ENCODE measurements at regions of chr1 and their contacts with region 1.

Region 1: DNA sequence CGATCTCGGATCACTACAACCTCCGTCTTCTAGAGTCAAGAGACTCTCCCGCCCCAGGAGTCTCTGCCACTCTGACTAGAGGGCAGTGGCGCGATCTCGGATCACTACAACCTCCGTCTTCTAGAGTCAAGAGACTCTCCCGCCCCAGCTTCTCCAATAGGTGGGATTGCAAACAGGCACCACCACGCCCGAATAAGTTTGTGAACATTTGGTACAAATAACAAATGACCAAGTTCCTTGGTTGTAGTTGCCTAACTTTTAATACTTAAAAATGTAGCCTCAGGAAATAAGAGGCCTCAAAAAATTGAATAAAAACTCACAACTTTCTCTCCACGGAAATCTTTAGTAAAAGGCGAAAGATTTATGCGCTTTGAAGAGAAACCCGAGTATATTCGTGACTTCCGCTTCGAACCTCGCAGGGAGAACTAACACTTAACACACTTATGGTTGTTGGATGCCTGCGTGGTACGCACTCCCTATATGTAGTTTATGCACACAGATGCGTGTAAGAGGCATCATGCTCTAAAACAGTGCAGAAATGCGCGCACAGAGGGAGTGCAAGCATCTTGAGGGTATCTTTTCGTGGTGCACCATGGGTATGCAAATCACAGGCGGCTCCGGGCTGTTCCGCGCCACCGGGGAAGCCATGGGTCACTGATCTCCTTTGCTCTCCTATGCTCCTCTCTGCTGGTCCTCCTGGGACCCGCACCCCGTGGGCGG is 11.4 kb downstream of the BTBD19 start:
- DNase-seq: peak; percentile 94 to 98
- H3K4me3 ChIP-seq: peak overlapping the region; percentile 18
- H3K4me1 ChIP-seq: peaks cover 12% of the 10 kb centered on the region
- H3K27me3 ChIP-seq: no peaks in the 10 kb centered on the region

Region 2: GRCh38 chr1:44730741-44731512 is 88.8 kb before region 1 on chr1 and contains the start of gene RNU5D-1:
- in situ Hi-C with region 1: loop called (anchors 10 kb)
- DNase-seq: peak; percentile 95 to 97
- H3K4me3 ChIP-seq: peak within 1 kb of the TSS; percentile 7; the same call in 1 of the 2 replicates
- H3K4me1 ChIP-seq: peaks cover 13% of the 10 kb centered on the region
- H3K27me3 ChIP-seq: no peaks in the 10 kb centered on the region

Region 3: DNA sequence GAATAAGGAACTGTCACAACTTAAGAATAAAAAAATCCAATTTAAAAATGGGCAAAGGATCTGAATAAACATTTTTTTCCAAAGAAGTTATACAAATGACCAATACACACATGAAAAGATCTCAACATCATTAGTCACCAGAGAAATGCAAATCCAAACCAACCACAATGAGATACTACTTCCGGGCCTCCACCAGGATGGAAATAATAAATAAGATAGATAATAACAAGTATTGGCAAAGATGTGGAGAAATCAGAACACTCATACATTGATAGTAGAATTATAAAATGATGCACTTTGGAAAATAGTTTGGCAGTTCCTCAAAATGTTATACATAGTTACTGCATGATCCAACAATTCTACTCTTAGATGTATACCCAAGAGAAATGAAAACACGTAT is 368.0 kb after region 1 on chr1:
- in situ Hi-C with region 1: no loop called
- DNase-seq: no peak
- H3K4me3 ChIP-seq: no peak overlapping the region
- H3K4me1 ChIP-seq: no peaks in the 10 kb centered on the region
- H3K27me3 ChIP-seq: no peaks in the 10 kb centered on the region

Region 4: DNA sequence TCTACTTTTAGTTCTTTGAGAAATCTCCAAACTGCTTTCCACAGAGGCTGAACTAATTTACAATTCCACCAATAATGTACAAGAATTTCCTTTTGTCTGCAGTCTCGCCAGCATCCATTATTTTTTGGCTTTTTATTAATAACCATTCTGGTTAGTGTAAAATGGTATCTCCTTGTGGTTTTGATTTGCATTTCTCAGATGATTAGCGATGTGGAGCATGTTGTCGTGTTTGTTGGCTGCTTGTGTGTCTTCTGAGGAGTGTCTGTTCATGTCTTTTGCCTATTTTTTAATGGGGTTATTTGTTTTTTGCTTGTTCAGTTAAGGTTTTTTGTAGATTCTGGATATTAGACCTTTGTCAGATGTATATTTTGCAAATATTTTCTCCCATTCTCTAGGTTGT is 1115.2 kb after region 1 on chr1:
- in situ Hi-C with region 1: no loop called
- DNase-seq: no peak
- H3K4me3 ChIP-seq: no peak overlapping the region
- H3K4me1 ChIP-seq: no peaks in the 10 kb centered on the region
- H3K27me3 ChIP-seq: no peaks in the 10 kb centered on the region

Measured in HAP-1 (cell line).